ENCODE measurements at regions of chr2 and their contacts with region 1.

Region 1: DNA sequence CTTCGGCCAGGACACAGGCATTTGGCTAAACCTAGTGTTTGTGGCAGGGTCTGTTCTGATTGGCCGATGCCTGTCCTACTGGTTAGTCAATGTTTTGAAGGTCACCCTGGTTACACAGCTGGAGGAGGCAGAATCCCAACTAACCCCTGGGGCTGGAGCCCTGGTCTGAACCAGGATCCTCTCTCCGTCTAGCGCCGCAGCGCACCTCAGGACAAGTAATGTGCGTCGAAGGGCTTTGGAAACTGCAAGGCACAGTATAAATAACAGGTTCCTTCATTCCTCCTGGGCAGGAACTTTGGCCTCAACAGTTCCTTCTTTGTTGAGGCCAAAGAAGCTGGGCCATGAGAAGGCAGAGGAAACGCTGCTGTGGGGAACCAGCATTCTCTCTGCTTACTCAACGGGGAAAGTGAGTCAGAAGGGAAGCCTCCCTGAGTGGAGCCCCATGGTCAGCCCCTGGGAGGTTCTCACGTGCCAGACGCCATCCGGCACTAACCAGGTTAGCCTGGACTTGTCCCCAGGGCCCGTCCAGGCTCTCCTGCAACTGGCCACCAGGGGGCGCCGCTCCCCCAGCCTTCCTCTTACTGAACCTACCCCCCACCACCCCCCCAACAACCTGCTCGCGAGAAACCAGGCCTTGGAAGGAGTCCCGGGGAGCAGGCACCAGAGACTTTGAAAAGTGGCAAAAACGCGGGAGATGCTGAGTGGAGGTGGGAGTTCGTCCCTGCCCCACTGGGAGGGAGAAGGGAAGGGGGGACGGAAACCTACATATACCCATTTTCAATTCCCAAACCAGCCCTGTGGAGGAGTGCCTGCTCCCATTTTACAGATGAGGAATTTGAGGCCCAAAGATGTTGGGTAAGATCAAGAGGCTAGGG is 19.8 kb downstream of the TEX44 start:
- DNase-seq: peak; percentile 99
- H3K4me3 Mint-ChIP-seq: peak overlapping the region; percentile 74
- H3K27ac Mint-ChIP-seq: peak overlapping the region; percentile 97
- H3K4me1 Mint-ChIP-seq: peaks cover 44% of the 10 kb centered on the region
- H3K27me3 Mint-ChIP-seq: no peaks in the 10 kb centered on the region

Region 2: DNA sequence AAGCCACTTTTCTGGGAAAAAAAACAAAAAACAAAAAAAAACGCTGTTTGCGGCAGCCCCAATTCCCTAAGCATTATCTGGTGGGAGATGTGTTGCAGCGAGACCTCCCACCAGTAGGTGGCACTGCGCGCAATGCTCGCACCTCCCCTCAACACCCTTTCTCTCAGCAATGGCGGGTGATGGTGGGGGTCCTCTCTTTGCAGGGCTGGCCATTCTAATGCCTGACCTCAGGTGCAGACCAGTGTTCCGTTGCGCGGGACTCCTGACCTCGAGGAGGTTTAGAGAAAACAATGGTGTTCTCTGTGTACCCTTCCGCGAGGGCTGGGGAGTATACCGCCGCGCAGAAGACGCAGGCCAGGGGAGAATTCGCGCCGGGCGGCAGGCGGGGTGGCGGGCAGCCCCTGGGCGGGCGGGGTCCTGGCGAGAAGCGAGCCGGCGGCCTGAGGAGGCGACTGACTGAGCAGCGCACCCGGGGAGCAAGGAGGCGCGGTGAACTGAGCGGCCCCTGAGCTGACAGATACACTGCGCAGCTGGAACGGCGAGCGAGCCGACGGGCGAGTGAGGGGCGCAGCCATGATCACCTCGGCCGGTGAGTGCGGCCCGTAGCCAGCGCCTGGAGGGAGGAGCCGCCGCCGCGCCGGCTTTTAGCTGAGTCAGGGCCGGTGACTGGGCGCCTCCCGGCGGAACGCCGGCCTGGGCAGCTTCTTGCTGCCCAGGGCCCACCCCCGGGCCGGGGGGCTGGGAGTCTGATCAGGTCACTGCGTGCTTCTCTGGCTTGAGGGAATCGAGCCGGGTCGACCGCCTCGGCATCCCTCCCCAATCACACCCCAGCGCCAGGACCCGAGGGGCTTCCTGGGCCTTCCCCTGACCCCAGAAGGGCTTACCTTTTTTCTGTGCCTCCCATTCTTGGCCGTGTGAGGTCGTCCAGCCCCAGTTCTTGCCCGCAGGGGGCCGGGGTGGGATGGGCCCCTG is 555.7 kb before region 1 on chr2 and contains the start of gene PSMD1:
- CTCF ChIA-PET with region 1: no interaction called
- POLR2A ChIA-PET with region 1: no interaction called
- intact Hi-C with region 1: loop called (anchors 5 kb)
- DNase-seq: peak; percentile 95
- H3K4me3 Mint-ChIP-seq: peak within 1 kb of the TSS; percentile 90
- H3K27ac Mint-ChIP-seq: peak within 1 kb of the TSS; percentile 98
- H3K4me1 Mint-ChIP-seq: peaks cover 56% of the 10 kb centered on the region
- H3K27me3 Mint-ChIP-seq: peaks cover 1% of the 10 kb centered on the region
- total RNA-seq, gene PSMD1: 116 TPM

Region 3: GRCh38 chr2:231642631-231643494 is 30.4 kb after region 1 on chr2:
- CTCF ChIA-PET with region 1: interaction called, 8 read pairs
- POLR2A ChIA-PET with region 1: interaction called, 8 read pairs
- intact Hi-C with region 1: loop called (anchors 1 kb)
- DNase-seq: peak; percentile 85
- H3K4me3 Mint-ChIP-seq: peak overlapping the region; percentile 60
- H3K27ac Mint-ChIP-seq: peak overlapping the region; percentile 63
- H3K4me1 Mint-ChIP-seq: peaks cover 9% of the 10 kb centered on the region
- H3K27me3 Mint-ChIP-seq: no peaks in the 10 kb centered on the region

Region 4: DNA sequence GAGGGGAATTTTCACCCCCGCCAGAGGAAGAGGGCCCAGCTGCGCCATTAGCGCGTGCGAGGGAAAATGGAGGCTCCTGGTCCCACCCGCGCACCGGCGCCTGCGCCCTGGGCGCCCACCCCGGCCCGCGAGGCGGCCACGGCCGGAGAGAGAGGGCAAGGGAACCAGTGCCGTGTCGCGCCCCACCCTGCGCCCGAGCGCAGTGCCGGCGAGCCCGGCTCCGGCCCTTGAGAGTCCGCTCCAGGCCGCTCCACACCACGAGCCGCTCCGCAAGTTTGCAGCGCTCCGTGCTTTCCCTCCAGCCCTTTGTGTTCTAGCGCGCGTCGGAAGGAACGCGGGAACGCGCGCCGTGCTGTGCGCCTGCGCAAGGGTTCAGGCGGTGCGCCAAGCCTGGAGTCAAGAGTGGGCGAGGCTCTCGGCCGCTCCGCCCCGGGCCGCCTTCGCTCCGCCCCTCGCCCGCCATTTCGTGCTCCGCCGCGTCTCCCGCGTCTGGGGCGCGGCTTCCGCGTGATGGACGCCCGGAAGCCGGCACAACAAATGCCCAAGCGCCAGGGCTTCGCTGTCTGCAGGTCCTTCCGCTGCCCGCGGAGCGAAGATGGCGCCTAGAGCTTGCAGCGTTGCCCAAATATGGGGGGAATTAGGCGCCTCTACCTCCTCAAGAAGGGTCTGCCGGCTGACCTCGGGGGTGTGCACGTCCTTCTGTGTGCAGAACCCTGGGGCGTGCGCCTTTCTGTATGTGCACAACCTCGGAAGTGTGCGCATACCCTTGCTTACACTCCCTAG is 49.8 kb after region 1 on chr2:
- CTCF ChIA-PET with region 1: interaction called, 5 read pairs
- POLR2A ChIA-PET with region 1: interaction called, 7 read pairs
- intact Hi-C with region 1: loop called (anchors 1 kb)
- DNase-seq: peak; percentile 97
- H3K4me3 Mint-ChIP-seq: peak overlapping the region; percentile 65
- H3K27ac Mint-ChIP-seq: peak overlapping the region; percentile 94
- H3K4me1 Mint-ChIP-seq: peaks cover 12% of the 10 kb centered on the region
- H3K27me3 Mint-ChIP-seq: no peaks in the 10 kb centered on the region

Region 5: GRCh38 chr2:231706731-231707624 is 94.6 kb after region 1 on chr2:
- CTCF ChIA-PET with region 1: interaction called, 154 read pairs
- POLR2A ChIA-PET with region 1: interaction called, 98 read pairs
- intact Hi-C with region 1: loop called (anchors 1 kb)
- DNase-seq: peak; percentile 98
- H3K4me3 Mint-ChIP-seq: peak overlapping the region; percentile 93
- H3K27ac Mint-ChIP-seq: peak overlapping the region; percentile 100
- H3K4me1 Mint-ChIP-seq: peaks cover 18% of the 10 kb centered on the region
- H3K27me3 Mint-ChIP-seq: peaks cover 3% of the 10 kb centered on the region

Region 6: DNA sequence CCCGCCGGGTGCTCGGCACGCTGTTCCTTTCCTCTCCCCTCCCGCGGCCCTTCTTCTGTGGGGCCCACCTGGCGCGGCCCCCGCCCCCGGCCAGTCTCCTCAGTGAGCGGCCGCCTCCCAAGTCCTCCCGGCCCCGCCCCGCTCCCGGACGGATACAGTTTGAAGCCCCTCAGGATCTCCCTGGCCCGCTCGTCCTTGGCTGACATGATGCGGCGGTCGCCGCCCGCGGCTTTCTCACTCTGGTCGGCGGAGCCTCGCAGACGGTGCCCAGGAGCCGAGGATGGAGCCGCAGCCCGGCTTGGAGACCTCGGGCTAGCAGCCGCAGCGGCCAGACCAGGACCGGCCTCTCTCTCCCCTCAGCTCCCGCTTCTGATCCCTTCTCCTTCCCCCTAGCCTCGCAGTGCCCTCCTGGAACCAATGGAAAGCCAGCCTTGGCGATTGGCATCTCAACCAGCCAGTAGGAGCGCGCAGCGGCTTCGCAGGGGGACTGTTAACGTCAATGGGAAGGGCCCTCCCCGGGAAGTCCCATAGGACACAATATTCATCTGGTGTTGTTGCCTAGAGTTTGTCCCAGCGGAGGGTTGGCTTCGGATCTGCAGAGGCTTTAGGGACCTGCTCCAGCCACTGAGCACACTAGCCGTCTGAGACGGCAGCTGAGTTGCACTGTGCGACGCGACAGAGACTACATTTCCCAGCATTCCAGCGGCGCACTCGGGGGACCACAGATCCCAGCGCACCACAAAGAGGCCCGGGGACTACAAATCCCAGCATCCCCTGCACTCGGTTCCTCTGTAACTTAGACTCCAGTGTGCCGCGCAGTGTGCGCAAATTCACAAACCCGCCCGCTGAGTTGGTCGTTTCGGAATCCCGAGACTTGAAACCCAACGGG is 168.7 kb after region 1 on chr2 and contains the start of gene PDE6D:
- CTCF ChIA-PET with region 1: interaction called, 3 read pairs
- POLR2A ChIA-PET with region 1: interaction called, 6 read pairs
- intact Hi-C with region 1: loop called (anchors 1 kb)
- DNase-seq: peak; percentile 98
- H3K4me3 Mint-ChIP-seq: peak within 1 kb of the TSS; percentile 89
- H3K27ac Mint-ChIP-seq: peak within 1 kb of the TSS; percentile 94
- H3K4me1 Mint-ChIP-seq: peaks cover 52% of the 10 kb centered on the region
- H3K27me3 Mint-ChIP-seq: no peaks in the 10 kb centered on the region
- total RNA-seq, gene PDE6D: 29.5 to 31.1 TPM

Measured in activated CD4-positive, alpha-beta memory T cell treated with anti-CD3 and anti-CD28 coated beads for 36 hours (primary cell).